PC-9 (cell line): ENCODE measurements at regions of chr7 and their contacts with region 1.

Region 1: DNA sequence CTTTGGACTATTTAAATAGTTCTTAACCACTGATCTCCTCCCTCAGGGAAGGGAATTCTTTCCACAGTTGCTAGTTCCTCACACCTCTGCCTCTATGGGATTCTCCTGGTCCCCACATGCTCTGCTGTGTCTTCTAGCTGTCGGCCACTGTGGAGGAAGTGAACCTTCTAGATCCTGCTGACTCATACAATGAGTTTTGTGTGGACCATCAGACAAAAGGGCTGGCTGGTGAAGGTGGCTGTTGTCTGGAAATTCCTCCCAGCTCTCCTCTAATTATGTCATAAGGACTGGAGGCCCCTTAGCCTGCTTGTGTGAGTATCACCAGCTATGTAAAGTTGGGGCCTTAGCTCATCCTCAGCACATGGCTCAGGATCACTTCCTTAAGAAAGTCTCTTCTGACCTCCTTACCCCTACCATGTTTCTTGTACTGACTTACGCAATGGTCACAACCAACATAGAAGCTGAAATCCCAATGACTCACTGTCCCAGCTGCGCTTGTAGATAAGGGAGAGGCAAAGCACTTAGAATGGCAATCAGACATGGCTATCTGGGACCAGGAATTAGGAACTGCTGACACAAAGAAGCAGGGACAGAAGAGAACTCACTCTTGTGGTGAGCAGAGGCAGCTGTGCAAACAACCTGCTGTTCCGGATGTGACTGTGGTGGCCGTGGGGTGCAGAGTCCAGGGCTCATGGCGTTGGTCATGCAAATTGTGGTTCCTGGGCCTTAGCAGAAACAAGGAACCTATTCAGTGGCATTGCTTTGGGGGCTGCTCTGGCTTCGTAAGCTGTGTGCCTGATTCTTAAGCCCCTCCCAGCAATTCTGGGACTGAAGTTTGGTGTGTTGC is 2.5 kb upstream of the MACC1 start:
- DNase-seq: peak; percentile 83 to 100
- H3K4me3 ChIP-seq: peak overlapping the region; percentile 3; the same call in 1 of the 2 replicates
- H3K27ac ChIP-seq: peak overlapping the region; percentile 99
- H3K4me1 ChIP-seq: peaks cover 61% of the 10 kb centered on the region
- H3K27me3 ChIP-seq: no peaks in the 10 kb centered on the region
- CTCF ChIP-seq: no peak

Region 2: DNA sequence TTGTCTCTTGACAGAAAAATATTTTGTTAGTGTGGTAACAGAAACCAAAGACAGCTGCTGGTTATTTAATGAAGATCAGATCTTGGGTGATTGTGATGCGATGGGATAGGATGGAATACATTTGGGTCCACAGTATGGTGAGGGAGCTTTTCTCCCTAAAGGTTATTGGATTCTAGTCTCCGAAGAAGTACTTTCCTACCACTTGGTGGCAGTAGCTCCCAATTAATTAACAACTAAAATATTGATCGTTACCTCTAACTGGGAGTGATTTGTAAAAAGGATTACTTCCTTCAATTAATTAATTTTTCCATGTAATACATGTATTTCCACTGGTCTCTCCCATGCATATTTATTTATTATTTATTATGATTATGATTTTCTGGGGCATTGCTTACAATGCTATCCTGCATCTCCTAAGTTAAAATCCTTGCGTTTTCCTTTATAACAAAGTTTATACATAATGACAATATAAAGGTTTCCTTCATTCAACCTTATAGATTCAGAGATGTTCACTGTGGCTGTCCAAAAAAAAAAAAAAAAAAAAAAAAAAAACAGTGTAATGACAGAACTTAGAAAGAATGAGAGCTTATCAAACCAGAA is 471.8 kb before region 1 on chr7:
- CTCF ChIA-PET with region 1: no interaction called
- POLR2A ChIA-PET with region 1: no interaction called
- intact Hi-C with region 1: loop called (anchors 2 kb)
- DNase-seq: peak in 1 of 2 experiments; percentile 60
- H3K4me3 ChIP-seq: no peak overlapping the region
- H3K27ac ChIP-seq: no peak overlapping the region
- H3K4me1 ChIP-seq: 0 out of 2 replicates have a peak, but pooled peaks cover 5% of the 10 kb centered on the region
- H3K27me3 ChIP-seq: no peaks in the 10 kb centered on the region
- CTCF ChIP-seq: peak; percentile 94

Region 3: GRCh38 chr7:19969859-19970498 is 249.7 kb before region 1 on chr7:
- CTCF ChIA-PET with region 1: no interaction called
- POLR2A ChIA-PET with region 1: no interaction called
- intact Hi-C with region 1: loop called (anchors 5 kb)
- DNase-seq: peak; percentile 20 to 87
- H3K4me3 ChIP-seq: peak overlapping the region; percentile 7; the same call in 1 of the 2 replicates
- H3K27ac ChIP-seq: peak overlapping the region; percentile 48
- H3K4me1 ChIP-seq: peaks cover 28% of the 10 kb centered on the region
- H3K27me3 ChIP-seq: no peaks in the 10 kb centered on the region
- CTCF ChIP-seq: no peak

Region 4: DNA sequence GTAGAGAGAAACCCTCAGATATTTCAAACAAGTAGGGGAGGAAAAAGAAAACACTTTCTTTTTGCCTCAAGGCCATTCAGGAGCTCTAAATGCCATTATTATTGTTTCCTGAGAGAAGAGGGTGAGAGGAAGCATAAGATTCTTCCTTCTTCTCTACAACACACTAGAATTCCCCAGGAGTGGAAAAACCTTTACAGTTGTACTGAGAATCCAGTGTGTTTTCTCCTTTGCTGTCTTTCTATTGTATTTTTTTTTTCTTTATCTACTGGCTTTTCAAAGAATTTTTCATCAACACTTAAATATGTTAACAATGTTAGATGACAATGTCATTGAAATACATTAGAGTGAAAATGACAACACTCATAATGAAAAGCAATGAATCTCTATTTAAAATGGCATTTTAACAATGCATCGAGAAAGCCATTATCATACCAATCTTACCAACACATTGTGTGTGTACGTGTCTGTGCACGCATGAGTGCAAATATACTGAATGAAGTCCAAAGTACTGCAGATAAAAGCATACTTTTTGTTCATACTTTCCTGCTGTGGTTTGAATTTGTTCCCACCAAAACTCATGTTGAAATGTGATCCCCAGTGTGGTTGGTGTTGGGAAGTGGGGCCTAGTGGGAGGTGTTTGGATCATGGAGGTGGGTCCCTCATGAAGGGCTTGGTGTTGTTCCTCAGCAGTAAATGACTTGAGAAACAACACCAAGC is 21.7 kb after region 1 on chr7:
- CTCF ChIA-PET with region 1: interaction called, 4 read pairs
- POLR2A ChIA-PET with region 1: interaction called, 3 read pairs
- intact Hi-C with region 1: loop called (anchors 1 kb)
- DNase-seq: peak in 1 of 2 experiments; percentile 54
- H3K4me3 ChIP-seq: no peak overlapping the region
- H3K27ac ChIP-seq: no peak overlapping the region
- H3K4me1 ChIP-seq: peaks cover 15% of the 10 kb centered on the region
- H3K27me3 ChIP-seq: no peaks in the 10 kb centered on the region
- CTCF ChIP-seq: no peak

Region 5: GRCh38 chr7:20310963-20311742 is 91.5 kb after region 1 on chr7:
- CTCF ChIA-PET with region 1: interaction called, 9 read pairs
- POLR2A ChIA-PET with region 1: no interaction called
- intact Hi-C with region 1: loop called (anchors 1 kb)
- DNase-seq: peak in 1 of 2 experiments; percentile 56
- H3K4me3 ChIP-seq: no peak overlapping the region
- H3K27ac ChIP-seq: no peak overlapping the region
- H3K4me1 ChIP-seq: no peaks in the 10 kb centered on the region
- H3K27me3 ChIP-seq: no peaks in the 10 kb centered on the region
- CTCF ChIP-seq: peak; percentile 92

Region 6: GRCh38 chr7:20352573-20353304 is 133.1 kb after region 1 on chr7:
- CTCF ChIA-PET with region 1: no interaction called
- POLR2A ChIA-PET with region 1: no interaction called
- intact Hi-C with region 1: loop called (anchors 1 kb)
- DNase-seq: peak; percentile 73 to 100
- H3K4me3 ChIP-seq: peak overlapping the region; percentile 15; the same call in 1 of the 2 replicates
- H3K27ac ChIP-seq: peak overlapping the region; percentile 92
- H3K4me1 ChIP-seq: peaks cover 38% of the 10 kb centered on the region
- H3K27me3 ChIP-seq: no peaks in the 10 kb centered on the region
- CTCF ChIP-seq: no peak

Region 7: DNA sequence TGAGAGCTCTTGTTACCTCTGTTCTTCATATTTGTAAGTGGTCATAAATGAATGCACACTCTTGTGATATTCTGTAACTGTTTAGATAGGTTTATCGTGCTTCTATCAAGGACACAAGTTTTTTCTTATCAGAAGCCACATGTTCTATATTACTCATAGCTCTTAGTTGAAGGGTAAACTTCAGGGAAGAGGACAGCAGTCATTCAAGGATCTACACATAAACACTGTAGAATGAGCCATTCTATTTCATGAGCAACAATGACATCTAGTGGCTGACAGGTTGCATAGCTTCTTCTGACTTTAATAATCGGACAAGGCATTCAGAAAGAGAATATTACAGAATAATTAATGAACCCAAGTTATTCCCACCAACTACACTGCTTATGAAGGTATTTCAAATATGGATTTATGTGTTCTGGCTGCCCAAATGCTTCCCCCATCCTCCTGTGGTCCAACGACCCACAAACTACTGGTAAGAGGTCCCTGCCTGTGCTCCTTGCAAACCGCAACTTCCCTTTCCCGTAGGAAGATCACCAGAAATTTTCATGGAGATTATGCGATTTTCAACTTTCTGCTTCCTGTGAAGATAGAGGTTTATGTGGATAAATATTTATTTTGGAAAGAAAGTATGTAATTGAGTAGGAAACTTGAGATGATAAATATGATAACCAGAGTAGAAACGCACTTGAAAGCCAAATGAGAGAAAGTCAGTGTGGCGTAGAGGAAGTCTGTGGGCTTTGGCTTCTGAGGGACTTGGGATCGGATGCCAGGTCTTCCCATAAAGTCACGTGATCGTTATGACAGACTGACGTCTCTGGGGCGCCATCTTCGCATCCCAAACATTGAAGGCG is 379.0 kb after region 1 on chr7:
- CTCF ChIA-PET with region 1: no interaction called
- POLR2A ChIA-PET with region 1: no interaction called
- intact Hi-C with region 1: loop called (anchors 2 kb)
- DNase-seq: peak; percentile 4 to 71
- H3K4me3 ChIP-seq: no peak overlapping the region
- H3K27ac ChIP-seq: no peak overlapping the region
- H3K4me1 ChIP-seq: no peaks in the 10 kb centered on the region; the same call in 1 of the 2 replicates
- H3K27me3 ChIP-seq: no peaks in the 10 kb centered on the region
- CTCF ChIP-seq: peak; percentile 97